T-cell (primary cell): ENCODE measurements at regions of chr1 and their contacts with region 1.

Region 1: GRCh38 chr1:32005522-32005921 is 8.1 kb upstream of the KHDRBS1 start:
- DNase-seq: no peak
- ATAC-seq: no peak
- H3K4me3 ChIP-seq: no peak overlapping the region
- H3K4me3 Mint-ChIP-seq: no peak overlapping the region
- H3K27ac ChIP-seq: no peak overlapping the region
- H3K27ac Mint-ChIP-seq: peak overlapping the region in 1 of 2 donors; percentile 10
- H3K4me1 ChIP-seq: peaks cover 0 to 5% of the 10 kb centered on the region in 2 experiments
- H3K4me1 Mint-ChIP-seq: peaks cover 4 to 10% (median 6%) of the 10 kb centered on the region in 3 donors
- H3K27me3 ChIP-seq: no peaks in the 10 kb centered on the region
- H3K27me3 Mint-ChIP-seq: no peaks in the 10 kb centered on the region

Region 2: GRCh38 chr1:31714442-31715086 is 291.0 kb before region 1 on chr1:
- CTCF ChIA-PET with region 1: no interaction called
- POLR2A ChIA-PET with region 1: interaction called in 1 of 2 experiments, 11 read pairs
- DNase-seq: peak in 18 of 35 experiments; percentile 14 to 58 (median 25)
- ATAC-seq: peak; percentile 48 to 80 (median 58)
- H3K4me3 ChIP-seq: peak overlapping the region; percentile 24 to 25
- H3K4me3 Mint-ChIP-seq: peak overlapping the region; percentile 31 to 72 (median 39)
- H3K27ac ChIP-seq: no peak overlapping the region
- H3K27ac Mint-ChIP-seq: no peak overlapping the region
- H3K4me1 ChIP-seq: peaks cover 0 to 20% of the 10 kb centered on the region in 2 experiments
- H3K4me1 Mint-ChIP-seq: peaks cover 12 to 24% (median 17%) of the 10 kb centered on the region in 3 donors
- H3K27me3 ChIP-seq: peaks cover 3 to 71% of the 10 kb centered on the region in 2 experiments
- H3K27me3 Mint-ChIP-seq: peaks cover 48 to 65% of the 10 kb centered on the region in 2 donors

Region 3: GRCh38 chr1:31815752-31816500 is 189.6 kb before region 1 on chr1 and contains the start of gene SPOCD1:
- CTCF ChIA-PET with region 1: no interaction called
- POLR2A ChIA-PET with region 1: interaction called in 1 of 2 experiments, 12 read pairs
- DNase-seq: peak; percentile 54 to 89 (median 76)
- ATAC-seq: peak; percentile 84 to 98 (median 91)
- H3K4me3 ChIP-seq: no peak within 1 kb of the TSS
- H3K4me3 Mint-ChIP-seq: no peak within 1 kb of the TSS
- H3K27ac ChIP-seq: peak within 1 kb of the TSS; percentile 7
- H3K27ac Mint-ChIP-seq: peak within 1 kb of the TSS; percentile 57 to 79
- H3K4me1 ChIP-seq: peaks cover 0 to 8% of the 10 kb centered on the region in 2 experiments
- H3K4me1 Mint-ChIP-seq: peaks cover 6 to 16% (median 9%) of the 10 kb centered on the region in 3 donors
- H3K27me3 ChIP-seq: no peaks in the 10 kb centered on the region
- H3K27me3 Mint-ChIP-seq: no peaks in the 10 kb centered on the region
- total RNA-seq, gene SPOCD1: not detected

Region 4: GRCh38 chr1:32052887-32053286 is 47.4 kb after region 1 on chr1:
- CTCF ChIA-PET with region 1: no interaction called
- POLR2A ChIA-PET with region 1: no interaction called
- DNase-seq: no peak
- ATAC-seq: no peak
- H3K4me3 ChIP-seq: no peak overlapping the region
- H3K4me3 Mint-ChIP-seq: no peak overlapping the region
- H3K27ac ChIP-seq: no peak overlapping the region
- H3K27ac Mint-ChIP-seq: no peak overlapping the region
- H3K4me1 ChIP-seq: no peaks in the 10 kb centered on the region
- H3K4me1 Mint-ChIP-seq: no peaks in the 10 kb centered on the region
- H3K27me3 ChIP-seq: no peaks in the 10 kb centered on the region
- H3K27me3 Mint-ChIP-seq: no peaks in the 10 kb centered on the region